ENCODE measurements at regions of chr3 and their contacts with region 1.

Region 1: DNA sequence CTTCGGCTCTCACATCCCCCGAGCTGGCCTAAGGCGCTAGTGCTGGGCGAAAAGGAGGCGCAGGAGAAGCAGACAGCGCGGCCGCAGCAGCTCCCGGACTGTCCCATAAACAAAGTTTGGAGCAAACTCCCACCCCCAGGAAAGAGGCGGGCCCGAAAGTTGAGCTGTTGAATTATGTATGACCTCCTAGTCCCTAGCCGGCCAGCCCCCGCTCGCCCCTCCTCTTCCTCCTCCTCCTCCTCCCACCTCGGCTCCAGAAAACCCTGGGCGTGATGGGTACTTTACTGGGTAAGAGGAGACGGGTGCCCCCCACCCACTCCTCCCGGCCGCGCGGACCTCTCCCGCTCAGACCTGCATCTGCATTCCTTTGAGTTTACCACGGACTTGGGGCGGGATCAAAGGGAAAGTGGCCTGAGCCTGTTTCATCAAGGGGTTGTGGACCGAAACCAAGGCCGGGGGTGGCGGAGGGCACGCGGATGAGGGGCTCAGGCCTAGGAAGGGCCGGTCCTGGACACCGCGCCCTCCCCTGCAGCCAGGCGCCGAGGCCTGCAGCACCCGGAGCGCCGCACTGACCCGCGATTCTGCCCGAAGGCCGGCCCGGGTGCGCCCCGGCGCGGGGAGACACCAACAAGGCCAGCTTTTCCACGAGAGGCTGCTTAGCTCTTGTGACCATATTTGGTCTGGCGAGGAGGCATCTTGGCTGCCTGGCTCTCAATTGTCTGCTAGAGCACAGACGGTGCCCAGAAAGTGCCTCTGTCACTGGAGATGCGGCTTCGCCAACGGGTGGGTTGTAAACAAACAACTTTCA is at the start of gene WWTR1:
- DNase-seq: peak; percentile 75 to 88
- ATAC-seq: peak; percentile 61
- total RNA-seq, gene WWTR1: 8.4 to 27.2 TPM

Region 2: DNA sequence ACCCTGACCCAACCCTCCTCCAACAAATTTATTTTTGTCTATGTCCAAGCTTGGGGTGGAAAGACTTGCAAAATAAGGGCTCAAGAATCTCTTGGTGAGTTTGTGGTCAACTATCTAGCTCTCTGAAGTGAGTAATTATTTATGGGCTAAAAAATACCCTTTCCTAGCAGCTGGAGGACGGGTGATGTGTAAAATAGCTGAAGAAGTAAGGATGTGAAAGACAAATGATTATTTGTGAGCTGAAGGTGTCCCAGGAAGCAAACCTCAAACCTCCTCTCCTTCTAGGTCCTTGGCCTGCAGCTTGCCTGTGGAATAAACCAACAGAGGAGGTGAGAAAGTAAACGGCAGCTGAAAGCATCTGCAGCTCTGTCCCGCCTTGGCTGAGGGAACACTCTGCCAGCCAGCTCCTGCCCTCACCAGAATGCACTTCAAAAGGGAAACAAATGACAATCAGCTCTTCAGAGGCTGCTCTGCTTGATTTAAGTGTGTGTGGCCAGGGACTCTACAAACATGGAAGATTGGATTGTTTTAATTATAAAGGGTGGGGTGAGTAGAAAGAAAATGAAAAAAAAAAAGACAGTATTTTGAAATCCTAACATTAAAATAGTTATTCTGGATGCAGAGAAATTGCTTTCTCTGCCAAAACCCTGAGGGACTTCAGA is 123.3 kb before region 1 on chr3:
- intact Hi-C with region 1: loop called in 1 of 2 experiments (anchors 5 kb)
- DNase-seq: no peak
- ATAC-seq: no peak

Region 3: DNA sequence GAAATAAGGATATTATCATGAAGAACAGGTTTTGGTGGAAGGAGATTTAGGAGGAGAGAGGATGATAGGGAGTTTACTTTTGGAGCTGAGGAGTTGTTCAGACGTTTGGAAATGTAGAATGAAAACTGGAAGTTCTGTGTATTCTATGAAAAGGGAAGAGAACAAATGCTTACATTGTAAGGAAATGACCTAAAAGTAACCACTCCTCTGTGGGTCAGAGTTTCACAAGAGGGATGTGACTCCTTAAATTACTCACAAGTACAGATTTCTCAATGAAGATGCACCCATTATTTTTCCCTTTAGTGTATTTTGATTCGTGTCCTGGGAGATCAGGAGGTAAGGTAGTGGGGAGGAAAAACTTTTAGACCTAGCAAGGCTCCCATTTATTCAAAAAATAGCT is 158.9 kb after region 1 on chr3:
- intact Hi-C with region 1: no loop called
- DNase-seq: no peak
- ATAC-seq: no peak

Measured in left colon (tissue), 2 donors.